IMR-90 (cell line): ENCODE measurements at regions of chr10 and their contacts with region 1.

Region 1: GRCh38 chr10:58518775-58519174 is 6.1 kb downstream of the BICC1 start:
- DNase-seq: peak; percentile 31
- ATAC-seq: peak; percentile 62
- H3K4me3 ChIP-seq: no peak overlapping the region
- H3K27ac ChIP-seq: no peak overlapping the region
- H3K4me1 ChIP-seq: peaks cover 5% of the 10 kb centered on the region
- H3K27me3 ChIP-seq: no peaks in the 10 kb centered on the region
- CTCF ChIP-seq: no peak
- POLR2A ChIP-seq: no peak
- RAD21 ChIP-seq: no peak

Region 2: DNA sequence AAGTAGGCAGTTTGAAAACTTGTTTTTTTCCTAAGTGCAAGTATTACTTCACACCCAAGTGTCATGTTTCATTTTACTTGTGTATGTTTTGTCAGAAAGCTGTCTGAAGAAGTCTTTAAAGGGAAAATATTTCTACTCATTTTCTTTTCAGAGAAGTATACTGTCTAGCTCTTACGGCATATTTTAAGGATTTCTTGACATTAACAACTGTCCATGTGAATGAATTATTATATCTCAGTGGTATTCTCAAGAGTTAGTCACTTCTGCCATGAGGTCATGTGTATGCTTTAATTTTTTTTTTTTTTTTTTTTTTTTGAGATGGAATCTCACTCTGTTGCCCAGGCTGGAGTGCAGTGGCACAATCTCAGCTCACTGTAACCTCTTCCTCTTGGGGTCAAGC is 223.4 kb after region 1 on chr10:
- CTCF ChIA-PET with region 1: no interaction called
- POLR2A ChIA-PET with region 1: interaction called, 12 read pairs
- dilution Hi-C with region 1: no loop called
- in situ Hi-C with region 1: no loop called
- intact Hi-C with region 1: no loop called
- DNase-seq: peak; percentile 35
- ATAC-seq: peak; percentile 24; the same call in 1 of the 2 replicates
- H3K4me3 ChIP-seq: no peak overlapping the region
- H3K27ac ChIP-seq: no peak overlapping the region
- H3K4me1 ChIP-seq: peaks cover 8% of the 10 kb centered on the region
- H3K27me3 ChIP-seq: no peaks in the 10 kb centered on the region
- CTCF ChIP-seq: no peak
- POLR2A ChIP-seq: no peak
- RAD21 ChIP-seq: no peak